ENCODE measurements at regions of chr3 and their contacts with region 1.

Region 1: DNA sequence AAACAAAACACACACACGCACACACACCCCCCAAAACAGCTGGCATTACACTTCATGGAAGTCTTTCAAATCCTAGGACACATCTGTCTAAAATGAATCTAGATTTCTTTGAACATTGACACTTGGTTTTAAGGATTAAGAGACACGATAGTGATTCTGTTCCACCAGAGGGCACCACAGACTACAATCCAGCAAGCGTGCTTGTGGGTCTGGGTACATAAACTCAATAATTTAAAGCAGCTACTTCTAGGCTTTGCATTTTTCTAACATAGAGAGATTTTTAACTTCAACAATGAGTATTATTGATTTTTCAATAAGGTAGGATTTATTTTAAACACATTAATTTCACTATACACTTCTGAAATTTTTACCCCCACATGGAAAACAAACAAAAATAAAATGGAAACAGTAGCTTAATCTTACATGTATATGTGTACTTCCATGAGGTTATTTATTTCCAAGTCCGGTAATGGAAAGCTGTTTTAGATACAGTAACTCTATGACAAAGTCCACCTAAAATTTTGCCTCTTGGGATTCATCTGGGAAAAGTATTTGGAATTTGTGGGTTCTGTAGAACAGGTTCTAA is 564.0 kb upstream of the TGFBR2 start:
- DNase-seq: peak; percentile 10 to 74 (median 62)
- ATAC-seq: peak; percentile 40
- H3K4me3 ChIP-seq: no peak overlapping the region
- H3K4me3 Mint-ChIP-seq: no peak overlapping the region
- H3K27ac ChIP-seq: no peak overlapping the region
- H3K27ac Mint-ChIP-seq: no peak overlapping the region
- H3K4me1 ChIP-seq: no peaks in the 10 kb centered on the region
- H3K4me1 Mint-ChIP-seq: no peaks in the 10 kb centered on the region
- H3K27me3 ChIP-seq: peaks cover 0 to 2% of the 10 kb centered on the region in 2 experiments
- H3K27me3 Mint-ChIP-seq: peaks cover 27% of the 10 kb centered on the region
- CTCF ChIP-seq: peak; percentile 75

Region 2: DNA sequence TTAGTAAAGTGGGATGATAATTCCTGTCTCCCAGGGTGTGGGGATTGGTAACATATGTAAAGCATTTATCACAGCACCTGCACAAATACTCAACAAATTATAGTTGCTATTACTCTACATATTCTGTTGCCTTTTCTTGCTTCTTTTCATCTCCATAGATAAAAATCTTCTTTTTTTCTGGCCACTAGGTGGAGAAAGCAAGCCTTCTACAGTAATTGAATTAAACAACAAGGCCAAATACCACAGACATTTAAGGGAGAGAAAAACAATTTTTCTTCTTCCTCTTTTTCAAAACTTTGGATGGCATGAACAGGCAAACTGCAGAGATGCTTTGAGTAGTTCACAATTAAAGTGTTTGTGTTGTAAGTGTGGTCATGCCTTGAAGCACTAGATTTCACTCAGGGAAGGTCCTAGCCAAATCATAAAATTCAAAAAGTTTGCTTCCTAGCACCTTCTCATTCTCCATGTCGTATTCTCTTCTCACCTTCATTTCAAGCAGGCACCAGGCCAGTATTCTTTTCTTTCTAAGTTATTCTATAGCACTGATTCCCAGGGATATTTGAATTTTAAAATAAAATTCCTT is 70.6 kb after region 1 on chr3:
- CTCF ChIA-PET with region 1: interaction called, 4 read pairs
- POLR2A ChIA-PET with region 1: no interaction called
- intact Hi-C with region 1: loop called (anchors 2 to 5 kb)
- DNase-seq: peak in 2 of 9 experiments; percentile 43 to 61
- ATAC-seq: no peak
- H3K4me3 ChIP-seq: no peak overlapping the region
- H3K4me3 Mint-ChIP-seq: no peak overlapping the region
- H3K27ac ChIP-seq: no peak overlapping the region
- H3K27ac Mint-ChIP-seq: no peak overlapping the region
- H3K4me1 ChIP-seq: no peaks in the 10 kb centered on the region
- H3K4me1 Mint-ChIP-seq: peaks cover 6% of the 10 kb centered on the region
- H3K27me3 ChIP-seq: no peaks in the 10 kb centered on the region
- H3K27me3 Mint-ChIP-seq: no peaks in the 10 kb centered on the region
- CTCF ChIP-seq: peak; percentile 78

Region 3: GRCh38 chr3:30578479-30578878 is 536.1 kb after region 1 on chr3:
- CTCF ChIA-PET with region 1: no interaction called
- POLR2A ChIA-PET with region 1: no interaction called
- intact Hi-C with region 1: loop called in 1 of 2 experiments (anchors 10 kb)
- DNase-seq: peak in 1 of 9 experiments; percentile 26
- ATAC-seq: no peak
- H3K4me3 ChIP-seq: no peak overlapping the region
- H3K4me3 Mint-ChIP-seq: no peak overlapping the region
- H3K27ac ChIP-seq: no peak overlapping the region
- H3K27ac Mint-ChIP-seq: no peak overlapping the region
- H3K4me1 ChIP-seq: no peaks in the 10 kb centered on the region
- H3K4me1 Mint-ChIP-seq: peaks cover 5% of the 10 kb centered on the region
- H3K27me3 ChIP-seq: no peaks in the 10 kb centered on the region
- H3K27me3 Mint-ChIP-seq: no peaks in the 10 kb centered on the region
- CTCF ChIP-seq: no peak

Region 4: GRCh38 chr3:30768703-30769685 is 726.6 kb after region 1 on chr3:
- CTCF ChIA-PET with region 1: interaction called, 17 read pairs
- POLR2A ChIA-PET with region 1: no interaction called
- intact Hi-C with region 1: no loop called
- DNase-seq: peak; percentile 34 to 80 (median 68)
- ATAC-seq: peak; percentile 48
- H3K4me3 ChIP-seq: no peak overlapping the region
- H3K4me3 Mint-ChIP-seq: no peak overlapping the region
- H3K27ac ChIP-seq: no peak overlapping the region
- H3K27ac Mint-ChIP-seq: no peak overlapping the region
- H3K4me1 ChIP-seq: no peaks in the 10 kb centered on the region
- H3K4me1 Mint-ChIP-seq: peaks cover 3% of the 10 kb centered on the region
- H3K27me3 ChIP-seq: no peaks in the 10 kb centered on the region
- H3K27me3 Mint-ChIP-seq: peaks cover 6% of the 10 kb centered on the region
- CTCF ChIP-seq: peak; percentile 76

Region 5: GRCh38 chr3:31695280-31696008 is 1653.1 kb after region 1 on chr3:
- CTCF ChIA-PET with region 1: no interaction called
- POLR2A ChIA-PET with region 1: no interaction called
- intact Hi-C with region 1: loop called in 1 of 2 experiments (anchors 10 kb)
- DNase-seq: peak in 4 of 9 experiments; percentile 22 to 44 (median 28)
- ATAC-seq: no peak
- H3K4me3 ChIP-seq: no peak overlapping the region
- H3K4me3 Mint-ChIP-seq: no peak overlapping the region
- H3K27ac ChIP-seq: no peak overlapping the region
- H3K27ac Mint-ChIP-seq: no peak overlapping the region
- H3K4me1 ChIP-seq: peaks cover 4% of the 10 kb centered on the region
- H3K4me1 Mint-ChIP-seq: no peaks in the 10 kb centered on the region
- H3K27me3 ChIP-seq: no peaks in the 10 kb centered on the region
- H3K27me3 Mint-ChIP-seq: no peaks in the 10 kb centered on the region
- CTCF ChIP-seq: no peak

Measured in CD8-positive, alpha-beta T cell (primary cell).